Mammary epithelial cell (primary cell): ENCODE measurements at regions of chr15 and their contacts with region 1.

Region 1: DNA sequence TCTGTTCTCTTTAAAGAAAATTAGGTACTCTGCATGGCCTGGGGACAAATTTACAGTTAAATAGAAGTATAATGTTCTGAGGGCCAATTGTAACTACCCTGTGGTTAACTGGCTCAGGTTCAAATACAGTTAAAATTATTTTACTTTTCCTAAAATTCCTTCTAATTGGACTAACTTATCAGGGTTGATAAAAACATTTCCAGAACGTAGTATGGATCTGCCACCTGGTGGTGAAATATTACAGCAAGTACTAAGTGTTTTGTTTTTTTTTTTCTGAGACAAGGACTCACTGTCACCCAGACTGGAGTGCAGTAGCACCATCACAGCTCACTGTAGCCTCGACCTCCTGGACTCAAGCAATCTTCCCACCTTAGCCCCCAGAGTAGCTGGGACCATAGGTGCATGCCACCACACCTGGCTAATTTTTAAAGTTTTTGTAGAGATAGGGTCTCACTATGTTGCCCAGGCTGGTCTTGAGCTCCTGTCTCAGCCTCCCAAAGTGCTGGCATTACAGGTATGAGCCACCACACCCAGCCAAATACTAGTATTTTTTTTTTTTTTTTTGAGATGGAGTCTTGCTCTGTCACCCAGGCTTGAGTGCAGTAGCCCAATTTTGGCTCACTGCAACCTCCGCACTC is 29.2 kb downstream of the NEO1 start:
- DNase-seq: peak; percentile 30
- H3K4me3 ChIP-seq: no peak overlapping the region
- H3K27ac ChIP-seq: no peak overlapping the region
- H3K4me1 ChIP-seq: peaks cover 10% of the 10 kb centered on the region
- H3K27me3 ChIP-seq: no peaks in the 10 kb centered on the region
- CTCF ChIP-seq: peak; percentile 56 to 65

Region 2: DNA sequence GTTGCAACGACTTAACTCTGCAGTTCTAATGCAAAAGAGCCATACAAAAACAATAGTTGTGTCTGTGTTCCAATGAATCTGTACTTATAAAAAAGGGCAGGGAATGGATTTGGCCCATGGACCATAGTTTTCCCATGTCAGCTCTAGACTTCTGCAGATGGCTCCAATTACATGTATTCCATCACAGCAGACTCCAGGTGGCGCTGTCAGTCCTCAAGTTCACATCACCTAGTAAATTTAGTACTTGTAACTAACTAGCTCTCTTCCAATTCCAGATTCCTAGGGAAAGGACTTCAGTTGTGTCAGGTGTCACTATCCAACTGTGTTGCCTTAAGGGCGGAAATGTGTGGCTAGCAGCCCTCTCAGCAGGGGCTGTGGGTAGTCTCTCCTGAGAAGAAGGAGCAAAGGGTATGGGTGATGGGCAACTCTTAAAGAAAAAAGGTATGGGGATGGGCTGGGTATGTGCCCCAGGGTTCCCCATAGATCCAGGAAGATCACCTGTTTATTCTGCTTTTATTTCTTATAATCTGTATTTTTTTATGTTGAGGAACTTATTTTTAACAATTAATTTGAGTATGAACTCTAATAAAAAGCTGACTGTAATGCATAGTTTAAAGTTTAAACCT is 359.3 kb before region 1 on chr15:
- CTCF ChIA-PET with region 1: no interaction called
- dilution Hi-C with region 1: no loop called
- in situ Hi-C with region 1: no loop called
- intact Hi-C with region 1: loop called (anchors 1 kb)
- DNase-seq: peak; percentile 41
- H3K4me3 ChIP-seq: no peak overlapping the region
- H3K27ac ChIP-seq: no peak overlapping the region
- H3K4me1 ChIP-seq: no peaks in the 10 kb centered on the region
- H3K27me3 ChIP-seq: no peaks in the 10 kb centered on the region
- CTCF ChIP-seq: peak; percentile 78 to 86

Region 3: DNA sequence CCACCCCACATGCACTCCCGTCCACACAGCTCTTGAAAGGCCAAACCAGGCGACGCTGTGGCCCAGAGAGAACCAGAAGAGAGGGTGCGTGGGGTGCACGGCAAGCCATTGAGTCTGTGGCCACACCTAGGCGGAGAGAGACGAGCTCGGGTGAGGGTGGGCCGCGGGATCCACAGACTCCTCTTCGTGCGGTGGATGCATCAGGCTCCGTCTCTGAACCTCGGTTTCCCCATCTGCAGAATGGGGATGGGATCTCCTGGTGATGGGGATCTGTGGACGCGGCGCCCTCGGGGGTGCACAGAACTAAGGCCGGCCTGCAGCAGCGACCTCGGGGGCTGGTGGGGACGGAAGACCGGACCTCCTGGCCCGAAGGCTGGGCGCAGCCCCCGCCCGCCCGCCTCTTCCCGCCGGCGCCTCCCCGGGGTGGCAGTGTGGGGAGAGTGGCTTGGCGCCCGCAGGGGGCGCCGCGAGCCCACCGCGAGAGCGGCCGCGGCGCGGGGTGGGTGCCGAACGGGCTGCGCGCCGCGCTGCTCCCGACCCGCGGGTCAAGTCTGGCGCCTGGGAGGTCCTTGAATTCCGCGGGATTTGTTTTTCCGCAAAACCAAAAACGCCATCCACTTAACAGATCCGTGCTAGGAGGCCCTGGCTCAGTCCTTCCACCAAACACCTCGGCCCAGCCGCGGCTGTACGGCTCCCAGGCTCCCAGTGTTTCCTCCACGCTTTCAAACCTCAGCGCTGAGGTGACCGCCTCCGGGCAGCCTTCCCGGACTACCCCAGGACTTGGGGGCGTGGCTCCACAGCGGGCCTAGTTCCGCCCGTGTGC is 284.7 kb before region 1 on chr15:
- CTCF ChIA-PET with region 1: no interaction called
- dilution Hi-C with region 1: loop called (anchors 25 kb)
- in situ Hi-C with region 1: loop called in 1 of 2 experiments (anchors 5 kb)
- intact Hi-C with region 1: loop called (anchors 1 kb)
- DNase-seq: no peak
- H3K4me3 ChIP-seq: peak overlapping the region; percentile 45 to 57 (median 57)
- H3K27ac ChIP-seq: no peak overlapping the region
- H3K4me1 ChIP-seq: peaks cover 10% of the 10 kb centered on the region
- H3K27me3 ChIP-seq: no peaks in the 10 kb centered on the region
- CTCF ChIP-seq: peak; percentile 18 to 50

Region 4: GRCh38 chr15:72961346-72961745 is 120.1 kb before region 1 on chr15:
- CTCF ChIA-PET with region 1: no interaction called
- dilution Hi-C with region 1: no loop called
- in situ Hi-C with region 1: no loop called
- intact Hi-C with region 1: no loop called
- DNase-seq: no peak
- H3K4me3 ChIP-seq: no peak overlapping the region
- H3K27ac ChIP-seq: no peak overlapping the region
- H3K4me1 ChIP-seq: no peaks in the 10 kb centered on the region
- H3K27me3 ChIP-seq: no peaks in the 10 kb centered on the region
- CTCF ChIP-seq: no peak

Region 5: DNA sequence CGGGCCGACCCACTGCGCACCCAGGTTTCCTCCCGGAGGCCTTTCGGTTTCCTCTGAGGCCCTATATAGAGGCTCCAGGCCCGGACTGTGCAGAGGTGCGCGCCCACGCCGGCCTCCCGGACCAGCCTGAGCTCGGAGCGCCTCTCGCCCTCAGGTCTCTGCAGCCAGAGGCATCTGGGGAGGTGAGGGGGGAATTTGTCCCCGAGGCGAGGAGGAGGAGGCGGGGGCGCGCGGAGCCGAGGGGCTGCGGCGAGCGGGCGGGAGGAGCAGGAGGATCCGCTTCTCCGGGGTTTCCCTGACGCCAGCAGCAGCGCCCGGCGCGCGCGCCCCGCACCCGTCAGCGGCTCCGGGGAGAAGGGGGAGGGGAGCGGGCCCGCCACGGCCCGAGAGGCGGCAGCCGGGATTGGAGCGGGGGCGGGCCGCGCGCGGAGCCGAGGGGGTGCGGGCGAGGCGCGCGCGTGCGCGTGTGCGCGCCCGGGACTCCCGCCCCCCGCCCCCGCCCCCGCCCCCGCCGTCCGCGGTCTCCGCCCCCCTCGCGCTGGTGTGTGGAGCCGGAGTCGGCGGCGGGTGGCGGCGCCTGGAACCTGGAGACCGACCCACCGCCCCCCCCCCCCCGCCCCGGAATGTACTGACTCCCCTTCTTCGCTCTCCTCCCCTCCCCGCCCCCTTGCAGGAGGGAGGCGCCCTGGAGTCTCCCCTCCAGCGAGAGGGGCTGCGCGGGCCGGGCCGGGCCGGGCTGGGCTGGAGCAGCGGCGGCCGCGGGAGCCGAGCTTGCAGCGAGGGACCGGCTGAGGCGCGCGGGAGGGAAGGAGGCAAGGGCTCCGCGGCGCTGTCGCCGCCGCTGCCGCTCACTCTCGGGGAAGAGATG is 29.4 kb before region 1 on chr15 and contains the start of gene NEO1:
- CTCF ChIA-PET with region 1: no interaction called
- dilution Hi-C with region 1: no loop called
- in situ Hi-C with region 1: no loop called
- intact Hi-C with region 1: loop called (anchors 2 kb)
- DNase-seq: peak; percentile 78
- H3K4me3 ChIP-seq: peak within 1 kb of the TSS; percentile 88 to 97 (median 88)
- H3K27ac ChIP-seq: no peak within 1 kb of the TSS
- H3K4me1 ChIP-seq: peaks cover 13% of the 10 kb centered on the region
- H3K27me3 ChIP-seq: no peaks in the 10 kb centered on the region
- CTCF ChIP-seq: no peak
- total RNA-seq, gene NEO1: 17.0 to 23.3 TPM

Region 6: GRCh38 chr15:73240866-73241499 is 159.5 kb after region 1 on chr15:
- CTCF ChIA-PET with region 1: no interaction called
- dilution Hi-C with region 1: no loop called
- in situ Hi-C with region 1: no loop called
- intact Hi-C with region 1: loop called (anchors 5 kb)
- DNase-seq: peak; percentile 44
- H3K4me3 ChIP-seq: no peak overlapping the region
- H3K27ac ChIP-seq: no peak overlapping the region
- H3K4me1 ChIP-seq: no peaks in the 10 kb centered on the region
- H3K27me3 ChIP-seq: no peaks in the 10 kb centered on the region
- CTCF ChIP-seq: peak; percentile 83 to 92